ENCODE measurements at regions of chr1 and their contacts with region 1.

Region 1: GRCh38 chr1:66996018-66996682 is 57.8 kb downstream of the SLC35D1 start:
- DNase-seq: peak in 6 of 10 donors; percentile 7 to 73 (median 52)
- H3K4me3 ChIP-seq: no peak overlapping the region
- H3K27ac ChIP-seq: peak overlapping the region in 2 of 59 donors; percentile 16 to 66
- H3K27me3 ChIP-seq: no peaks in the 10 kb centered on the region
- CTCF ChIP-seq: peak; percentile 22 to 85 (median 70)

Region 2: GRCh38 chr1:67149179-67149770 is 153.1 kb after region 1 on chr1:
- intact Hi-C with region 1: loop called (anchors 1 to 5 kb)
- DNase-seq: peak in 8 of 10 donors; percentile 13 to 62 (median 52)
- H3K4me3 ChIP-seq: peak overlapping the region in 6 of 59 donors; percentile 3 to 23 (median 9)
- H3K27ac ChIP-seq: no peak overlapping the region
- H3K27me3 ChIP-seq: peaks cover 0 to 3% (median 0%) of the 10 kb centered on the region in 45 donors
- CTCF ChIP-seq: peak; percentile 24 to 97 (median 81)